Endothelial cell of umbilical vein (primary cell): ENCODE measurements at regions of chr2 and their contacts with region 1.

Region 1: GRCh38 chr2:150487537-150488429 is at the start of gene RND3:
- DNase-seq: peak; percentile 99
- H3K4me3 ChIP-seq: peak within 1 kb of the TSS; percentile 87 to 97 (median 95)
- H3K27ac ChIP-seq: peak within 1 kb of the TSS; percentile 85
- H3K4me1 ChIP-seq: peaks cover 32% of the 10 kb centered on the region
- H3K27me3 ChIP-seq: no peaks in the 10 kb centered on the region
- CTCF ChIP-seq: peak; percentile 81 to 90
- POLR2A ChIP-seq: peak; percentile 100
- total RNA-seq, gene RND3: 132 and 158 TPM in 2 replicates

Region 2: GRCh38 chr2:149597668-149598326 is 890.0 kb before region 1 on chr2:
- CTCF ChIA-PET with region 1: interaction called, 6 read pairs
- POLR2A ChIA-PET with region 1: no interaction called
- dilution Hi-C with region 1: no loop called
- intact Hi-C with region 1: loop called (anchors 1 kb)
- DNase-seq: peak; percentile 87
- H3K4me3 ChIP-seq: peak overlapping the region in 1 of 3 experiments; percentile 30
- H3K27ac ChIP-seq: peak overlapping the region; percentile 81
- H3K4me1 ChIP-seq: peaks cover 7% of the 10 kb centered on the region
- H3K27me3 ChIP-seq: no peaks in the 10 kb centered on the region
- CTCF ChIP-seq: peak; percentile 60 to 91
- POLR2A ChIP-seq: no peak

Region 3: GRCh38 chr2:149799013-149799705 is 688.6 kb before region 1 on chr2:
- CTCF ChIA-PET with region 1: interaction called, 7 read pairs
- POLR2A ChIA-PET with region 1: no interaction called
- dilution Hi-C with region 1: no loop called
- intact Hi-C with region 1: loop called (anchors 1 kb)
- DNase-seq: peak; percentile 52
- H3K4me3 ChIP-seq: no peak overlapping the region
- H3K27ac ChIP-seq: no peak overlapping the region
- H3K4me1 ChIP-seq: peaks cover 6% of the 10 kb centered on the region
- H3K27me3 ChIP-seq: no peaks in the 10 kb centered on the region
- CTCF ChIP-seq: peak; percentile 15 to 34
- POLR2A ChIP-seq: no peak

Region 4: DNA sequence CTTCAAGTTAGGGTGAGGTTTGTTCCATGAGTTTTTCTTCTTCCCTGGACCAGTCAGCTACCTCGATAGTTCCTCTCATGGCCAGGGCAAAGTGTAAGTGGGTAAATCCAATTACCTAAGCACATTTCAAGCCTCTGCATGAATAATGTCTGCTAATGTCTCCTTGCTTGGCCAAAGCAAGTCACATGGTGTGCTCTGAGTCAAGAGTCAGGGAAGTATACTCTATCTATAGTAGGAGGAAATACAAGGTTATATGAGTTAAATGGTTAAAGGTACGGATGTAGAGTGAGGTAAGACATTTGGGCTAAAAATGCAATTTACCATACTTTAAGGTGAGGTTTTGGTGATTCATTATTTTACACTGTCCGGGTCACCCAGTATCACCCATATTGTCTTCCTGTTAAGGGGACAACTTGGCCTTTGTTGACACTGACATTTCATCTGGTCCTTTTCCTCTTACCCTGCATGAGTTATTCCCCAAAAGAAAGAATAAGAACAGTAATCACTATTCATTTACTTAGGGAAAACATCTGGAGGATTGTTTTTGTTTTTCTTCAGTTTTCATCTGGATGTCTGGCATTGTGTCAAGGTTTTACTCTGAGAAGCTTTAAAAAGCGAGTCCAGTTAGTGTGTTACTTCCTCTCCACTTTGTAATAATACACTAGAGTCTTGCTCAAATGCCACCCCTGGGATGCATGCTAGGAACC is 405.9 kb before region 1 on chr2:
- CTCF ChIA-PET with region 1: no interaction called
- POLR2A ChIA-PET with region 1: no interaction called
- dilution Hi-C with region 1: no loop called
- intact Hi-C with region 1: loop called (anchors 1 kb)
- DNase-seq: peak; percentile 61
- H3K4me3 ChIP-seq: no peak overlapping the region
- H3K27ac ChIP-seq: peak overlapping the region; percentile 55
- H3K4me1 ChIP-seq: peaks cover 27% of the 10 kb centered on the region
- H3K27me3 ChIP-seq: no peaks in the 10 kb centered on the region
- CTCF ChIP-seq: no peak
- POLR2A ChIP-seq: no peak

Region 5: DNA sequence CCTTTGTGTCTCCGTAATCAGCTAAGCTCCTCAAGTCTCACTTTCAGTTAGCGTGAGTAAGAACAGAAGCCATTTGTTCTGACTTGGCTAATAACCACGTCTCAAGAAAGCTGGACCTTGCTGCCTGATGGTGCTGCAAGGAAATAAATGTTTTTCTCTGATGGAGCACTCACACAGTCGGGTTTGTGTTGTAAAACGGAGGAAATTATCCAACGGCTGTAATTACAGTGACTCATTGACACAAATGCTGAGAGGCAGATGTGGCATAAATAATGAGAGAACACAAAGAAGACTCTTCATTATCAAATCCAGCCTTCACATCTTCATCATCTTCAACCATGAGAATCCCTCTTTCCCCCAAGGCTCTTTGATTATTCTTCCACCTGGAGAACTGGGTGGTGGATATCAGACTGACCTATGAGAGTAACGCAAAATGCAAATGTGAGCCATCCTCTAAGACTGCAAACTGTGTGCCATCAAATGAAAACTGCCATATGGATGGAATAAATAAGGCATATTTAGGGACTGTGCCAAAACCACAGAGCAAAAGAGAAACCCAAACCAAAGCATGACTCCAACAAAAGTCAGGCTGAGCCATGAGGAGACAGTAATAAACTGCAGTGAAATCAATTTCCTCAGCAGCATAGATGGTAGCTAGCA is 252.9 kb before region 1 on chr2:
- CTCF ChIA-PET with region 1: no interaction called
- POLR2A ChIA-PET with region 1: interaction called, 3 read pairs
- dilution Hi-C with region 1: no loop called
- intact Hi-C with region 1: loop called (anchors 5 kb)
- DNase-seq: peak; percentile 84
- H3K4me3 ChIP-seq: no peak overlapping the region
- H3K27ac ChIP-seq: peak overlapping the region; percentile 2
- H3K4me1 ChIP-seq: peaks cover 15% of the 10 kb centered on the region
- H3K27me3 ChIP-seq: no peaks in the 10 kb centered on the region
- CTCF ChIP-seq: no peak
- POLR2A ChIP-seq: no peak

Region 6: GRCh38 chr2:150610671-150611279 is 123.0 kb after region 1 on chr2:
- CTCF ChIA-PET with region 1: no interaction called
- POLR2A ChIA-PET with region 1: no interaction called
- dilution Hi-C with region 1: no loop called
- intact Hi-C with region 1: loop called (anchors 1 kb)
- DNase-seq: peak; percentile 45
- H3K4me3 ChIP-seq: no peak overlapping the region
- H3K27ac ChIP-seq: no peak overlapping the region
- H3K4me1 ChIP-seq: peaks cover 8% of the 10 kb centered on the region
- H3K27me3 ChIP-seq: no peaks in the 10 kb centered on the region
- CTCF ChIP-seq: peak; percentile 31 to 34
- POLR2A ChIP-seq: no peak

Region 7: GRCh38 chr2:150963336-150963735 is 475.6 kb after region 1 on chr2:
- CTCF ChIA-PET with region 1: no interaction called
- POLR2A ChIA-PET with region 1: no interaction called
- dilution Hi-C with region 1: no loop called
- intact Hi-C with region 1: no loop called
- DNase-seq: no peak
- H3K4me3 ChIP-seq: no peak overlapping the region
- H3K27ac ChIP-seq: no peak overlapping the region
- H3K4me1 ChIP-seq: no peaks in the 10 kb centered on the region
- H3K27me3 ChIP-seq: no peaks in the 10 kb centered on the region
- CTCF ChIP-seq: no peak
- POLR2A ChIP-seq: no peak